ENCODE measurements at regions of chr9 and their contacts with region 1.

Region 1: DNA sequence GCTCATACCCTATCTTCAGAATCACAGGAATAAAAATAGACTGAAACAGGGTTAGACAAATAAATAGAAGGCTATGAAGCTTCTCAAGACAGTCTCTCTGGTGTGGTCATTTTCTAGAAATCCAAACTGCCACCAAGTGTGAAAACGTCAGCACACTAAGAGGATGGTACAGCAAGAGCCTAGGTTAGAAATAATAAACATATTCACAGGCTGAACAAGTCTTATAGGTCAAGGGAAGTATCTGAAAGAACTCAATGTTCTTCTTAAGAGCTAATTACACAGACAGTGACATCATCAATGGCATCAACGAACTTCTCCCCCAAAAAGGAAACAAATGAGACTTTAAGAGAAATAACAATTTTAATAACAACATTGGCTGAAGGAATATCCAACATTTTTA is 22.7 kb upstream of the PLPP6 start:
- DNase-seq: no peak
- H3K4me3 ChIP-seq: no peak overlapping the region
- H3K27ac ChIP-seq: no peak overlapping the region
- H3K4me1 ChIP-seq: no peaks in the 10 kb centered on the region
- H3K27me3 ChIP-seq: no peaks in the 10 kb centered on the region
- CTCF ChIP-seq: no peak
- POLR2A ChIP-seq: no peak

Region 2: GRCh38 chr9:4382722-4383317 is 256.6 kb before region 1 on chr9:
- intact Hi-C with region 1: loop called (anchors 1 kb)
- DNase-seq: no peak
- H3K4me3 ChIP-seq: no peak overlapping the region
- H3K27ac ChIP-seq: no peak overlapping the region
- H3K4me1 ChIP-seq: no peaks in the 10 kb centered on the region
- H3K27me3 ChIP-seq: no peaks in the 10 kb centered on the region
- CTCF ChIP-seq: peak in 3 of 4 experiments; percentile 37 to 64 (median 54)
- POLR2A ChIP-seq: no peak

Region 3: DNA sequence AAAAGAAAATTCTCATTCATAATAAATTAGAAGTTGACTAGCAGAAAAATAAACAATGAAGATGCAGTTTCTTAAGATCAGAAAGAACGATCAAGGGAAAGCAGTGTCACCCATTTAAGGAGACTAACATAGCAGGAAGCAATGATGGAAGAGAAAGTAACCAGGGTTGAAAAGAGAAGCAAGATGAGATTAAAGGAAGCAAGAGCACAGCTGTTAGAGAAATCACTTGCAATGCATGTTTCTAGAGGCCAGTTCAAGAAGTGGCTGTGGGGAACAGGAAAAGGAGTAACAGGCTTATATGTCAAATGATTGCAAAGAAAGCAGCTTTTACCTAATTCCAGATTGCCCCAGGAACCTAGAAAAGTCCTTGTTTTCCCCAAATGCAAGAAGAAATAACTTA is 196.0 kb before region 1 on chr9:
- intact Hi-C with region 1: no loop called
- DNase-seq: no peak
- H3K4me3 ChIP-seq: no peak overlapping the region
- H3K27ac ChIP-seq: no peak overlapping the region
- H3K4me1 ChIP-seq: no peaks in the 10 kb centered on the region
- H3K27me3 ChIP-seq: no peaks in the 10 kb centered on the region
- CTCF ChIP-seq: no peak
- POLR2A ChIP-seq: no peak

Region 4: GRCh38 chr9:4604678-4605095 is 34.7 kb before region 1 on chr9:
- intact Hi-C with region 1: loop called (anchors 5 kb)
- DNase-seq: peak; percentile 75
- H3K4me3 ChIP-seq: no peak overlapping the region
- H3K27ac ChIP-seq: no peak overlapping the region
- H3K4me1 ChIP-seq: no peaks in the 10 kb centered on the region
- H3K27me3 ChIP-seq: no peaks in the 10 kb centered on the region
- CTCF ChIP-seq: peak; percentile 44 to 85 (median 72)
- POLR2A ChIP-seq: no peak